ENCODE measurements at regions of chr12 and their contacts with region 1.

Region 1: DNA sequence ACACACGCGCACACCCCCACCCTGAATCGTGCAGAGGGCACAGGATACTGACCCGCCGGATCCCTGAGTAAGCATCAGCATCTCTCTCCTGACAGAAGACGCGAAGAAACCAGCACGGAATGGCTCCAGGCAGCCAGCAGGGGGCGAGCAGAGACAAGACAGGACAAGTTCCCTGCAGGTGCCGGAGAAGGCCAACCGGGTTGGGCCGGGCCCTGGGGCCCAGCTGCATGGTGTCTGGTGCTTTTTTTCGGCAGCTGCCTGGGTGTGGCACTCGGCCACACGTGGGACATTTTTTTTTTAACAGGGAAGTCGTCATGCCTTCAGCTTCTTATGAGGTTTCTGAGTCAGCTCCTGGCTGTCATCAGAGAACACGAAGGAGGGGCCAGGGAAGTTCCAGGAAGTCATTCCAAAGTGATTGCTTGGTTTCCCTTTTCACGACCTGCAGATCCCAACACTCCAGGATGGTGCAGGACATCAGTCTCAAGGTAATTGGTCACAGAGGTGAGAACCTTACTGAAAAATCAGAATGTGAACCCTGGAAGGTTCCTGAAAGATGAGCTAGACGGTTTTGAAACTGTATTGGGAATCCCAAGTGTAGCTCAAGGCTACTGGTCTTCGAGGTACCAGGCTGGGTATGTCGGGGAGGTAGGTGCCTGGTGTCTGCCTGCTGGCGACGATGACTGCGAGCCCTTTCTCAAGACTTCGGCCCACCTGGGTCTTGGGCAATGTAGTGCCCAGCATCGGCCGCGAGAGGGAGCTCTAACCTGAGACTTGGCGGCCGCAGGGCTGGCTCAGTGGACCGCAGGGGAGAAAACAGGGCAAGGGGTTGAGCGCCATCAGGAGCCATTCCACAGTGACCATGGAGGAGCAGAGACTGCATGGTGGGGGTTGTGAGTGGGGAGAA is 190.8 kb upstream of the PRMT8 start:
- DNase-seq: peak; percentile 92
- H3K4me3 Mint-ChIP-seq: peak overlapping the region; percentile 54
- H3K27ac Mint-ChIP-seq: peak overlapping the region; percentile 66
- H3K4me1 Mint-ChIP-seq: peaks cover 11% of the 10 kb centered on the region
- H3K27me3 Mint-ChIP-seq: peaks cover 6% of the 10 kb centered on the region

Region 2: DNA sequence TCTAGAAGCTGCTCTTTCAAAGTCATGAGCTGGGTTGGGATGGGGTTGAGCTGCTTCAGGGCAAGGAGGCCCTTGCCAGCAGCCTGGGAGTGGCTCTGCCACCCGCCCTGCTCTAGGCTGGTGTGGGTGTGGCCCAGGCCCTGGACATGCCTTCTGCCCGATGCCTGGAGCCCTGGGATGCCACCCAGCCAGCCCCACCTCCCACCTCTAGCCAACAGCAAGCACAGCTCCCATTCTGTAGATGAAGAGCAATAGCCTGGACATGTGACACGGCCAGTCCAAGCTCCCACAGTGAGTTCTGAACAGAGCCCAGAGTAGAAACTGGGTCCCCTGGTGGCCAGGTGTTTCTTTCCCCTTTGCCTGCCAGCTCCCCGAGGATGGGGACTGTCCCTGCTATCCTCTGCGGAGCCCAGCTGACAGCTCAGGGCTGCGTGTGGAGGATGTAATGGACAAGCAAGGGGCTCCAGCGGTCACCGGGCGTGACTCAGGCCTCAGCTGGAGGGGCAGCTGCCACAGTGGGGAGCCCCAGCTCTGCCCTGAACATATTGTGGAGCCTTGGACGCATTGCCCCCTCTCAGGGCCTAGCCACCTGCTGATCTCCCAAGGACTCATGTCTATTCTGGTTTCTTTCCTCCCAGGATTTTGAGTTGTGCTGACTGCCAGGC is 57.9 kb before region 1 on chr12:
- CTCF ChIA-PET with region 1: no interaction called
- intact Hi-C with region 1: no loop called
- DNase-seq: no peak
- H3K4me3 Mint-ChIP-seq: no peak overlapping the region
- H3K27ac Mint-ChIP-seq: no peak overlapping the region
- H3K4me1 Mint-ChIP-seq: no peaks in the 10 kb centered on the region
- H3K27me3 Mint-ChIP-seq: no peaks in the 10 kb centered on the region

Region 3: GRCh38 chr12:3288690-3289089 is 11.5 kb before region 1 on chr12:
- CTCF ChIA-PET with region 1: interaction called, 12 read pairs
- intact Hi-C with region 1: no loop called
- DNase-seq: no peak
- H3K4me3 Mint-ChIP-seq: no peak overlapping the region
- H3K27ac Mint-ChIP-seq: no peak overlapping the region
- H3K4me1 Mint-ChIP-seq: no peaks in the 10 kb centered on the region
- H3K27me3 Mint-ChIP-seq: no peaks in the 10 kb centered on the region

Region 4: DNA sequence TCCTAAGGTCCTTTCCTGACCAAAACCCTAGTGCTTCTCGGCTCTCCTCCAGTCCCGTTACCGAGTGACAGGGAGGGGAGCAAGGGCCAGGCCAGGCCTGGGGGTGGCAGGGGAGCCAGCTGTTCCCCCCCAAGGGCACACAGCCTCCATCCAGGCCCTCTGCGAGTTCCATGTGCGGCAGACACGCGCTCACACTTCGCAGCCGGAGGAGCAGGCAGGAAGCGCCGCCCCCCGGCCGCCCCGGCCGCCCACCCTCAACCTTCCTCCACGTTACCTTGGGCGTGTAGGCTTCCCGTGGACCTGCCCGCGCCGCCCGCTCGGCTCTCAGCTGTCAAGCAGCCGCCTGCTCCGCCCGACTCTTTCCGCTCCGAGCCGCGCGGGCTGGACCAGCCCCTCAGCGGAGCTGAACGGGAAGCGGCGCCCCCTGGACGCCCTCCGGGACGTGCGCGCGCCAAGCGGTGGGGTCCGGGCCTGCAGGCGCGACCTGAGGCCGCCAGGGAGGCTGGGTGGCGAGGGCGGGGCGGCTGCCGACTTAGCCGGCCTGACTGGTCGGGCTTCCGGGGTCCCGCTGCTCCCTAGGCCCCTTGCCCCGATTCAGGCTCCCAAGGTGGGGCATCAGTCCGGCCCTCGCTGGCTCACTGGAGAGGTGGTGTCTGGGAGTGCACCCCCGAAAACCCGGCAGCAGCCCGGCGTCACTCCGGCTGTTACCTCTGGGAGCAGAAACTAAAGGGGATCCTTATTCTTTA is 452.7 kb after region 1 on chr12 and contains the start of gene CRACR2A:
- CTCF ChIA-PET with region 1: no interaction called
- intact Hi-C with region 1: loop called (anchors 1 kb)
- DNase-seq: peak; percentile 86
- H3K4me3 Mint-ChIP-seq: peak within 1 kb of the TSS; percentile 95
- H3K27ac Mint-ChIP-seq: peak within 1 kb of the TSS; percentile 98
- H3K4me1 Mint-ChIP-seq: peaks cover 53% of the 10 kb centered on the region
- H3K27me3 Mint-ChIP-seq: no peaks in the 10 kb centered on the region
- total RNA-seq, gene CRACR2A: 19.0 to 20.7 TPM

Region 5: DNA sequence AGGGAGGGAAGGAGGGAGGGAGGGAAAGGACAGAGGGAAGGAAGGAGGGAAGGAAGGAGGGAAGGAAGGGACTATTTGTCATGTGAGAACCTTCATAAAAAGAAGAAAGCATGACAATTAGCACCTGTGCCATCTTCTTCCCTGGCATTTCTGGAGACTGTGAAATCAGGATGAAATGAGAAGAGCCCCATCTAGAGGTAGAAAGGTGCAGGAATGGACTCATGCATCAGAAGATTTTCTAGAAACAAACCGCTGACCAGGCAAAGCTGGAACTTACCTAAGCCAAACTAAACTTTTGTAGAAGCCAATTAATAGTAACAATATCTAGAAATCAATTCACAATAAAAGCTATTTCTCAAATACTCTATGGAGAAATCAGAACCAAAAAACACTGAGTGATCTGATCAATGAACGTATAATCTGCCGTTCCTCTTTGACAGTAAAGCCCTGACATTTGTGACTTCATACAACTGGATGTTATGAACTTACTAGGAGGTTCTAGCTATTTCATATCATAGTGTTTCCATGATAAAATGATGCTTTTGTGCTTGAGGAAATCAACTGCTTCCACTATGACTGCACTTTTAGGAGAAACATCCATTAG is 477.1 kb after region 1 on chr12:
- CTCF ChIA-PET with region 1: interaction called, 22 read pairs
- intact Hi-C with region 1: loop called (anchors 1 kb)
- DNase-seq: peak; percentile 23
- H3K4me3 Mint-ChIP-seq: no peak overlapping the region
- H3K27ac Mint-ChIP-seq: no peak overlapping the region
- H3K4me1 Mint-ChIP-seq: peaks cover 3% of the 10 kb centered on the region
- H3K27me3 Mint-ChIP-seq: no peaks in the 10 kb centered on the region

Region 6: DNA sequence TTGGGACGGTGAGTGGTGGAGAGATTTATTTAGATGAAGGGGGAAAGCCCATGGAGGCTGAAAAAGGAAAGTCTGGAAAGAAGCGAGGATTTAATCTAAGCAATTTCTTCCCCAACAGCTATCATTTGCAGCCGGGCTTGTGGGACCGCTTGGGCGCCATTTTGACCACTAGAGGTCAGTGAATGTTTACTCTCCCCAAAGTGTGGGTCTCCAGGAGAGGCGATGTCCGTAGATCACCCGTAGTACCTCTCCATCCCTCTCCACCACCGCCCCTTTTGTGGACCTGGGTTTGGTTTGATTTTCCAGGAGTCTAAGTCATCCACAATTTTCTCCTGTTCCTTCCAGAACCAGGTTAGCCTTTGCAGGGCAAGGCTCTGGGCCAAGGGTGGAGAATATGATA is 664.3 kb after region 1 on chr12:
- CTCF ChIA-PET with region 1: no interaction called
- intact Hi-C with region 1: loop called (anchors 2 kb)
- DNase-seq: peak; percentile 48
- H3K4me3 Mint-ChIP-seq: no peak overlapping the region
- H3K27ac Mint-ChIP-seq: no peak overlapping the region
- H3K4me1 Mint-ChIP-seq: peaks cover 20% of the 10 kb centered on the region
- H3K27me3 Mint-ChIP-seq: no peaks in the 10 kb centered on the region

Measured in activated naive CD4-positive, alpha-beta T cell treated with anti-CD3 and anti-CD28 coated beads for 36 hours (primary cell).